Activated T-helper 2 cell treated with anti-CD3 and anti-CD28 coated beads, Interferon-gamma antibody, Interleukin-2, Interleukin-4, amounts not matched to agents 10 μg/mL and 5 μg/mL and 100 μg/mL, durations not matched to agents 14 hours and 24 hours and 36 hours (primary cell): ENCODE measurements at regions of chr5 and their contacts with region 1.

Region 1: DNA sequence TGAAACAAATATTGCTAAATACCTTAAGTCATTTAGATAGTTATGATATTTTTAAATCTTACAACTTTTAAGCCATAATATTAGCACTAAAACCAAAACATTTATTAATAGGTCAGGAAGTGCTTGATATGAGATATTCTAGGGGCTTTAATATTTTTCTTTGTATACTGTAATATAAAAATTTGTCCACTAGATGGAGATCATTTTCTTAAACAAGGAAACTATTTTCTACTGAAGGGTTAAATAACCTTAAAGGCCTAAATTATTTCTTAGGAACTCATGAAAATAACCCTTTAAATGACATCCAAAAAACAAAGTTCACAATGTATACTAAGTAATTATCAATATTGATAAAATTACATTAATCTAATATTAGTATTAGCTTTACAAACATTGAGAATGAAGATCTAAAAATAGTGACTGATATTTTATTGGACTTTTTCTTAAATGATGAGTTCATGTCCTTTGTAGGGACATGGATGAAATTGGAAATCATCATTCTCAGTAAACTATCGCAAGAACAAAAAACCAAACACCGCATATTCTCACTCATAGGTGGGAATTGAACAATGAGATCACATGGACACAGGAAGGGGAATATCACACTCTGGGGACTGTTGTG is 635.7 kb downstream of the RAB3C start:
- DNase-seq: no peak
- H3K4me3 Mint-ChIP-seq: no peak overlapping the region
- H3K27ac Mint-ChIP-seq: no peak overlapping the region
- H3K4me1 Mint-ChIP-seq: peaks cover 18% of the 10 kb centered on the region
- H3K27me3 Mint-ChIP-seq: peaks cover 16% of the 10 kb centered on the region

Region 2: DNA sequence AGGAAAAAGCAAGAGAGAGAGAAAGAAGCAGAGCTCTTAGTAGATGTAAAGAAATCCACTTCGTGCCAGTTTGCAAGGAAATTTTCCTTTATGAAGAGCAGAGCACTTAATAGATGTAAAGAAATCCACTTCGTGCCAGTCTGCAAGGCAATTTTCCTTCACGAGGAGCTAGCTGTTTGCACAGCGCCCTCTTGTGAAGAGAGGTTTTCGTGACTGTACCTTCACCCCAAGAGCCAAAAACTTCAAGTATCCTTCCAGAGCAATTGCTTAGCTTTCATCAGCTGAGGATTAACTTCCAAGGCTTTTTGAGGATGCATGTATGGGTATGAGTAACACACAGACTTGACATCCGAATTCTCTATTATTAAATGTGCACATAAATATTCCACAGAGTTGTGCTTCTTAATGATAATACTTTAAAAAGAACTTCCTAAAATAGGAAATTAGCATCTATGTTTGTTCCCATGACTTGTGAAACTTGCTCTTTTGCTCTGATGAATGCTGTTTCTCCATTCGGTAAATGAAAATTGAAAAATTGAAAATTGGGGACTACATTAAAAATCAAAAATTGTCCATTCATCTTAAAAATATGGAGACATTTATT is 149.4 kb after region 1 on chr5:
- intact Hi-C with region 1: loop called (anchors 2 kb)
- DNase-seq: peak; percentile 22
- H3K4me3 Mint-ChIP-seq: no peak overlapping the region
- H3K27ac Mint-ChIP-seq: no peak overlapping the region
- H3K4me1 Mint-ChIP-seq: peaks cover 3% of the 10 kb centered on the region
- H3K27me3 Mint-ChIP-seq: peaks cover 10% of the 10 kb centered on the region